Dendritic cell treated with granulocyte-macrophage colony-stimulating factor and Interleukin-4, amounts not matched to agents 40 ng/mL and 50 ng/mL, for 4 days (primary cell): ENCODE measurements at regions of chr12 and their contacts with region 1.

Region 1: DNA sequence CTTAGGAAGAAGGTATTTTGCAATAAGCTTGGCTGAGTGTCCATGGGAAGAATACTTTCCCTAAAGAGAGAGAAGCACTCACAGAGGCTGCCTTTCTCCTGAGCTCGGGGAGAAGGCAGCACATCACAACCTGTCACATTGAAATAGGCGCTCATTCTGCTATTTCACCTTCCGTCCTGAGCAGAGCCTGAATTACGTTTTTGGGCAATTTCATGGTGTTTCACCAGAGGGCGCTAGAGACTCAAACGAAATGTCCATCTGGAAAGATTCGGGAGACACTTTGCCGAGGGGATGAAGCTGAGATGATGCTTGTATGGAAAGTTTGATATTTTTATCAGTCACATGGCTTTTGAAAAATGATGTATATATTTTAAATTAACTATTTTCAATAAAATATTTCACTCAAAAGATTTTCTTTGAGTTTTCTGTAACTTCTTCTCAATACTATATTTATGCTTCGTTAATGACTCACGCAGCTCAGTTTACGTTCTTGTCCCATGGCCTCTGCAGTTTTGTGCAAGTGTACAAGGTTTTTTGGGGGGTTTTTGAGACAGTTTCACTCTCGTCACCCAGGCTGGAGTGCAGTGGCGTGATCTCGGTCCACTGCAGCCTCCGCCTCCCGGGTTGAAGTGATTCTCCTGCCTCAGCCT is 17.4 kb upstream of the B4GALNT3 start:
- H3K4me3 Mint-ChIP-seq: no peak overlapping the region
- H3K27ac Mint-ChIP-seq: no peak overlapping the region
- H3K4me1 Mint-ChIP-seq: no peaks in the 10 kb centered on the region
- H3K27me3 Mint-ChIP-seq: no peaks in the 10 kb centered on the region

Region 2: GRCh38 chr12:546921-547845 is 104.8 kb after region 1 on chr12:
- intact Hi-C with region 1: loop called (anchors 1 kb)
- H3K4me3 Mint-ChIP-seq: no peak overlapping the region
- H3K27ac Mint-ChIP-seq: no peak overlapping the region
- H3K4me1 Mint-ChIP-seq: peaks cover 37% of the 10 kb centered on the region
- H3K27me3 Mint-ChIP-seq: peaks cover 67% of the 10 kb centered on the region

Region 3: GRCh38 chr12:737122-737739 is 294.9 kb after region 1 on chr12:
- intact Hi-C with region 1: no loop called
- H3K4me3 Mint-ChIP-seq: no peak overlapping the region
- H3K27ac Mint-ChIP-seq: no peak overlapping the region
- H3K4me1 Mint-ChIP-seq: no peaks in the 10 kb centered on the region
- H3K27me3 Mint-ChIP-seq: no peaks in the 10 kb centered on the region

Region 4: DNA sequence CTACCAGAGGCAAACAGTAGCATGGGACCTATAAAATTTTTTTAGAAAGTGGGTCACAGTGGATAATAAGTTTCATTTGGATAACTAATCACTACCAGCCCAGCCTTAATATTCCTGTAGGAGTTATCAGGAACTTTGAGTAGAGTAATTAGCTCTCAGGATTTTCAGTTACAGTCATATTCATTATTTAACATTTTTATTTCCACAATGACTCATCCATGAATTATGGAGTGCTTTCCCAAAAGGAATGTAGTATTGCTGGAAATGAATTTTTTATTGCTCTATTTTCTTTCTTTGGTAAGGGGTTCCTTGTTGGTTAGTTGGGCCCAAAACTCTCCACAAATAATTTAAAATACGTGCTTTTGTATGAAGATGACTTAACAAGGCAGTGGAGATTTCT is 602.3 kb after region 1 on chr12:
- intact Hi-C with region 1: no loop called
- H3K4me3 Mint-ChIP-seq: no peak overlapping the region
- H3K27ac Mint-ChIP-seq: no peak overlapping the region
- H3K4me1 Mint-ChIP-seq: peaks cover 20% of the 10 kb centered on the region
- H3K27me3 Mint-ChIP-seq: no peaks in the 10 kb centered on the region